ENCODE measurements at regions of chr11 and their contacts with region 1.

Region 1: DNA sequence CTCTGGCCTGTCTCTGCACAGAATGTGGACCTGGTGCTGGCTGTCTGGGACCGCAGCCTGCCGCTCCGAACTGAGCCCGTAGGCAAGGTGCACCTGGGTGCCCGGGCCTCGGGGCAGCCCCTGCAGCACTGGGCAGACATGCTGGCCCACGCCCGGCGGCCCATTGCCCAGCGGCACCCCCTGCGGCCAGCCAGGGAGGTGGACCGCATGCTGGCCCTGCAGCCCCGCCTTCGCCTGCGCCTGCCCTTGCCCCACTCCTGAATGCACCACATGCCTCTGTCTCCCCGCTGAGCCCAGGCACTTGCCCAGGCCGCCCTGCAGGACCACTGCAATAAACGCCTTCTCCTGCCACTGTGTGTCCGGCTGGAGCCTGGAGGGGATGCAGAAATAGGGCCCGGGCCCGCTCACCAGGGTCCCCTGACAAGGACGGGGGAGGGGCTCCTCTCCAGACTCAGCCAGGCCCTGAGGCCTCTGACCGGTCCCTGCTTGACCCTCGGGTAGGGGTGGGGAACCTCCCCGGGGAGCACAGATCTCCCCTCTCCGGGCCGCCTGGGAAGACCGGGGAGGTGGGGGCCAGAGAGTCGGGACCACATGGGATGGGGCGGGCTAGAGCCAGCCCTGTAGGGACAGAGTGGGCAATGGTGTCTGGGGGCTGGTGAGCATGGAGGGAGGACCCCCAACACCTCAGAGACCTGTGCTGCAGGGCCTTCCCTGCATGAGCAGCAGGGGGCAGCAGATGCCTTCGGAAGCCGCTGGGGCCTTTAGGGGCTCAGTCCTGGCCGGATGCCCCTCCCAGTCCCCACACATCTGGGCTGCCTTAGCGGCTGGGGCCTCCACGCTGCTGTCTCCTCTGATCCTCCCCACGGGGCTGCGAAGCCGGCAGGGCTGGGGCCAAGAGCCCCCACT is 1.4 kb upstream of the TNNI2 start:
- DNase-seq: peak; percentile 61
- H3K4me3 Mint-ChIP-seq: no peak overlapping the region
- H3K27ac Mint-ChIP-seq: no peak overlapping the region
- H3K4me1 Mint-ChIP-seq: no peaks in the 10 kb centered on the region
- H3K27me3 Mint-ChIP-seq: peaks cover 2% of the 10 kb centered on the region

Region 2: DNA sequence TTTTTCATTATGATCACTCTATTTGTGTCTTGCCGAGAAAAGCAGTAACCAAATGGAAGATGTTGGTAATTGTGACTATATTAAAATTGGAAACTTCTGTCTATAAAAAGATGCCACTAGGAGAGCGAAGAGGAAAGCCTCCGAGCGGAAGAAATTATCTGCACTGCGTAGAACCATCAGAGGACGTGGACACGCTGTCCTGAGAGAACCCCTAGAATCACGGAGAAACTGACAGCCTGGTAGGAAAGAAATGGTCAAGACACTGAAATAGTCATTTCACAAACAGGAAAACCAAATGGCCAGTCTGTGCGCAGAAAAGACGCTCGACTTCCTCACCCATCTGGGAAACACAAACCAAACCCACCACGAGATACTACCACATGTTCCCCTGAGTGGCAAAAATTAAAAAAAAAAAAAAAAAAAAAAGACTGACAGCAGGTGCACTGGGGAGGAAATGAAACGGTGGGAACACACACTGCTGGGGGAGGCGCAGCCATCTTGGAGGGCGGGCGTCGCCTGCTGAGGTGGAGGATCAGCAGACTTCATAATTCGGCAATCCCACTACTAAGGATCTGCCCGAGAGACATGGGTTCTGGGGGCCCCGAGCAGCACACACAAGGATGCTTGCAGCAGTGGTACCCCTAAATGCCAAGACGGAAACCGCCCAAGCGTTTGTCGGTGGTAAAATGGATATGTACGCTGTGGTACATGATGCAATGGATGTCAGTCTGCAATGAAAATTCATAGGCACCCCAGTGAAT is 108.3 kb before region 1 on chr11:
- intact Hi-C with region 1: no loop called
- DNase-seq: no peak
- H3K4me3 Mint-ChIP-seq: peak overlapping the region; percentile 62
- H3K27ac Mint-ChIP-seq: peak overlapping the region; percentile 61
- H3K4me1 Mint-ChIP-seq: peaks cover 6% of the 10 kb centered on the region
- H3K27me3 Mint-ChIP-seq: peaks cover 17% of the 10 kb centered on the region

Region 3: DNA sequence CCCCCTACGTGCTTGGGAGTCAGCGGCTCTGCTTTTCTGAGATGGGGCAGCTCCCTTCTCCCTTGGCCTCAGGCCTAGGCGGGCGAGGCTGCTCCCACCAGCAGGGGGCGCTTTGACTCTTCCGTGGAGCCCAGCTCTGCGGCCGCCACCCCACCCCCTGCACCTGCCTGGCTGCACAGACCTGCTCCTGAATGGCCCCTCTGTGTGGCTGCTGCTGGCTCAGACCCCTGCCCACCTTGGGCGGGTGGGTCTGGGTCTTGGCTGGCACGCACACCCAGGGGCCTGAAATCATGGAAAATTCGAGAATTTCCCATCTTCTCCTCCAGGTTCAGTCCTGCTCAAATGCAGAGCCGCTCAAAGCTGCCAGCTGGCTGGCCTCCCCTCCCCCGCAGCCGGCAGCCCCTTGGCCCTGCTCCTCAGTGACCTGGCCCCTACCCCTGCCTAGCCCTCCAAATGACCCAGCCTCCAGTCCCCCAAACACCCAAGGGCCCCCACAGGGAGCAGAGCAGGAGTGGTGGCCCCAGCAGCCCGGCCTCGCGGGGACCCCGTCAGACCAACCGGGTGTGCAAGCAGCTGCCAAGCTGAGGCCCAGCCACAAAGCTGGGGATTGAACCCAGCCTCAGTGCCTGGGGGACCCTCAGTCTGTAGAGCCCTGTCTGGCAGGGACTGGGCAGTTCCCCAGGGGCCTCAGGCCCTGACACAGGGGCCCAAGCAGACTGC is 45.3 kb after region 1 on chr11:
- intact Hi-C with region 1: loop called (anchors 1 kb)
- DNase-seq: peak; percentile 60
- H3K4me3 Mint-ChIP-seq: no peak overlapping the region
- H3K27ac Mint-ChIP-seq: no peak overlapping the region
- H3K4me1 Mint-ChIP-seq: no peaks in the 10 kb centered on the region
- H3K27me3 Mint-ChIP-seq: no peaks in the 10 kb centered on the region

Measured in activated T-helper 1 cell treated with anti-CD3 and anti-CD28 coated beads, Interleukin-12 subunit alpha, Interleukin-12 subunit beta, Interleukin-2, Interleukin-4 antibody, amounts not matched to agents 30 ng/mL and 10 ng/mL and 1 ng/mL, durations not matched to agents 14 hours and 24 hours and 36 hours (primary cell).